H1 (cell line): ENCODE measurements at regions of chr21 and their contacts with region 1.

Region 1: GRCh38 chr21:30283404-30283803 is 654 bp upstream of the KRTAP24-1 start:
- DNase-seq: no peak
- H3K4me3 ChIP-seq: no peak overlapping the region
- H3K27ac ChIP-seq: no peak overlapping the region
- H3K4me1 ChIP-seq: no peaks in the 10 kb centered on the region
- H3K27me3 ChIP-seq: no peaks in the 10 kb centered on the region
- CTCF ChIP-seq: no peak
- EP300 ChIP-seq: no peak
- POLR2A ChIP-seq: no peak
- RAD21 ChIP-seq: no peak

Region 2: DNA sequence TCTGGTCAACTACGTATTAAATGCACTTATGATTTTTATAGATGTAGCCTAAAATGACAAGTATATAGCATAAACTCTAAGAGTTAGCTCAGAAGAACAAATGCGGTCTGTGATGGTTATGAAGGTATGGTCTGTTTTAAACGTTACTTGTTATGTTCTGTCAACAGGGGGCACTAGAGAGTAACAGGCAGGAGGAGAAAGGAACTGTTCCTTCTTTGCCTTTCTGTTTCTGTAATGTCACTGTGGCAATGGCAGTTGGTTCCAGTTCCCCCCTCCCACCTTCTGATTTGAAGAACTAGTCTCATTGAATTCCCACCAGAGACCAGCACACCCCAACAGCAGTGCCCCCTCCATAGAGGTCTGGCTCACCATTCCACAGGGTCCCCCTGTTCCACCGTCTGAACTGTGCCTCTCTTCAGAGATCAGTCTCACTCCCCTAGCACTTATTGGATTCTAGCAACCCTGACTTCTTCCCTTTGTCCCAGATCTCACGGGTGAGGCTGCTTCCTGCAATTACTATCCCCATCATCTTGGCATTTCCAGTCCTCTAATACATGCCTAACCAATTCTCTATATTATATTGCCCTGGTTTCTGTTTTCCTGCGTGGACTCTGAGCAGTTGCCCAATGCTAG is 14.7 kb before region 1 on chr21:
- CTCF ChIA-PET with region 1: interaction called, 12 read pairs
- POLR2A ChIA-PET with region 1: no interaction called
- DNase-seq: peak in 1 of 2 experiments; percentile 48
- H3K4me3 ChIP-seq: no peak overlapping the region
- H3K27ac ChIP-seq: no peak overlapping the region
- H3K4me1 ChIP-seq: no peaks in the 10 kb centered on the region
- H3K27me3 ChIP-seq: no peaks in the 10 kb centered on the region
- CTCF ChIP-seq: peak in 2 of 3 experiments; percentile 57 to 86; a peak in 3 of 4 replicates
- EP300 ChIP-seq: no peak
- POLR2A ChIP-seq: no peak
- RAD21 ChIP-seq: peak; percentile 67 to 68

Region 3: GRCh38 chr21:30355906-30356305 is 72.5 kb after region 1 on chr21:
- CTCF ChIA-PET with region 1: no interaction called
- POLR2A ChIA-PET with region 1: no interaction called
- DNase-seq: no peak
- H3K4me3 ChIP-seq: no peak overlapping the region
- H3K27ac ChIP-seq: no peak overlapping the region
- H3K4me1 ChIP-seq: peaks cover 0 to 2% (median 0%) of the 10 kb centered on the region in 4 experiments; a peak in 1 of 7 replicates
- H3K27me3 ChIP-seq: no peaks in the 10 kb centered on the region
- CTCF ChIP-seq: no peak
- EP300 ChIP-seq: no peak
- POLR2A ChIP-seq: no peak
- RAD21 ChIP-seq: no peak